Thyroid gland (tissue), 4 donors: ENCODE measurements at regions of chr2 and their contacts with region 1.

Region 1: DNA sequence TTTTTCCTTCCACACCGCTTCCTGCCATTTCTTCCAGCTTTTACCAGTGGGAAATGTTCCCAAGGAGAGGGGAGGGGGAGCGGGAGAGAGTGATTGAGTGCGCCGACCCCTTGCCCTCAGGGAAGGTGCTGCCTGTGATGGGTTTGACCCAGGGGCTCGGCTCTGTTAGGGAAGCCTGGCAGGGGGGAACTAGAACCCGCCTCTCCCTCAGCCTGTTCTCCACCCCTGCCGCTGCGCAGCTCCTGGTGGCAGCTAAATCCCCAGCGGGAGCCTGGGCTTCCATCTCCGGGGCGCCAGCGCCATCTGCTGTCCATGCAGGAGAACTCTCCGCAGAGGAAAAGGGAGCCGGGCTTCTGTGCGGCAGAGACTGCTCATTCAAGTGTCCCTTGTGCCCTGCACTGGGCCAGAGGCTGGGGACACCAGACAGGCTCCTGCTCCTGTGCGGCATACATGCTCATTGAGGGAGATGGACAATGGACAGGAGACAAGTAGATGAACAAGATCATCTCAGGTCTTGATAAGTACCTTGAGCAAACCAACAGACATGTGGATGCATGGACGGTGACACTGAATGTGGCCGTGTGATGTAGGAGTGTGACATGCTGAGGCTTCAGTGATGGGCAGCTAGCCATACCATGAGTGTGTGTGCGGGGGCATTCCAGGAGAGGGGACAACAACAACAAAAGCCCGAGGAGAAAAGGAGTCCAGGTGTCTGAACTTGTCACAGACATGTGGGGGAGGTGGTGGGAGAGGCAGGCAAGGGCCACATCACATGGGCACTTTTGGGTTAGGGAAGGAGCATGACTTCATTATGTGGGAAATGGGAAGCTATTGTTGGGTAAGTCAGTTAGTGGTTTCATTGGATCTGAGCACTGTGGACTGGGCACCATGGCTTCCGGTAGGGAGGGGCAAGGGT is 13.3 kb downstream of the CHPF start:
- DNase-seq: peak; percentile 72 to 84
- H3K4me3 ChIP-seq: no peak overlapping the region
- H3K27ac ChIP-seq: no peak overlapping the region
- H3K4me1 ChIP-seq: no peaks in the 10 kb centered on the region
- H3K27me3 ChIP-seq: no peaks in the 10 kb centered on the region
- CTCF ChIP-seq: peak; percentile 86 to 99 (median 97)
- POLR2A ChIP-seq: no peak

Region 2: DNA sequence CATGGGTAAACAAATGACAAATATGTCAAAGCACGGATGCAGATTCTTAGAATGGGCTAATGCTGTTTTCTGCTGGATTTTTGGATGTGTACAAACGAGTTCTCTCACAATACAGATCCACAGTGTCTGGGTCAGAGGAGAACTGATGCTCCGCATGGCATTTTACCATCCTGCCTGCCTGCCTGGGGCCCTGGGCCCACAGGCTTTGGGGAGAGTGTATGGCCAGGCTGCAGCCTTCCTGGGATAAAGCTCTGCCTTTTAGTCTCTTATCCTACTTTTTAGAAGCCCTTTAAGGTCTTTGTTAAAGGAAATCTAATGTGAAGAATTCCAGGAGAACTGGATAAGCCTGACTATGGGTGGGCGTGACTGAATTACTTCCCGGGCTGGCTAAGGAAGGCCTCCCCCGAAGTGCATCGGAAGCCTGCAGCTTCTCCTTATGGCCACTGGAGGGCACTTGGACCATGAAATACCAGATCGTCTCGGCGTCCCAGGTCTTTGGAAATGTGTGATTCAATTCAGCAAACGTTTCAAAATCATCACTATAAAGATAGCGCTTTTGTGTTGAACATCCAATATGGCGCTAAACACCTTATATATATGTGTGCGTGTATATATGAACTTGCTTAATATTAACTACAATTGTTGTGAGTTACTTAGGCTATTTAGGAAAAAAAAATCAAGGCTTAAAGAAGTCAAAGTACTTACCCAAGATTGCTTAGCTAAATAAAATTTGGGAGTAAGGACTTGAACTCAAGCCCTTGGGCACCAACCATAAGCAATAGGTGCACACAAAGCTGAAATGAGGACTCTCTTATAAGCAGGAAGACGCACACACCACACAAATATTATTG is 127.4 kb before region 1 on chr2:
- intact Hi-C with region 1: loop called (anchors 2 kb)
- DNase-seq: peak; percentile 61 to 66
- H3K4me3 ChIP-seq: no peak overlapping the region
- H3K27ac ChIP-seq: no peak overlapping the region
- H3K4me1 ChIP-seq: peaks cover 0 to 5% of the 10 kb centered on the region in 2 donors
- H3K27me3 ChIP-seq: no peaks in the 10 kb centered on the region
- CTCF ChIP-seq: peak; percentile 74 to 89 (median 83)
- POLR2A ChIP-seq: no peak

Region 3: DNA sequence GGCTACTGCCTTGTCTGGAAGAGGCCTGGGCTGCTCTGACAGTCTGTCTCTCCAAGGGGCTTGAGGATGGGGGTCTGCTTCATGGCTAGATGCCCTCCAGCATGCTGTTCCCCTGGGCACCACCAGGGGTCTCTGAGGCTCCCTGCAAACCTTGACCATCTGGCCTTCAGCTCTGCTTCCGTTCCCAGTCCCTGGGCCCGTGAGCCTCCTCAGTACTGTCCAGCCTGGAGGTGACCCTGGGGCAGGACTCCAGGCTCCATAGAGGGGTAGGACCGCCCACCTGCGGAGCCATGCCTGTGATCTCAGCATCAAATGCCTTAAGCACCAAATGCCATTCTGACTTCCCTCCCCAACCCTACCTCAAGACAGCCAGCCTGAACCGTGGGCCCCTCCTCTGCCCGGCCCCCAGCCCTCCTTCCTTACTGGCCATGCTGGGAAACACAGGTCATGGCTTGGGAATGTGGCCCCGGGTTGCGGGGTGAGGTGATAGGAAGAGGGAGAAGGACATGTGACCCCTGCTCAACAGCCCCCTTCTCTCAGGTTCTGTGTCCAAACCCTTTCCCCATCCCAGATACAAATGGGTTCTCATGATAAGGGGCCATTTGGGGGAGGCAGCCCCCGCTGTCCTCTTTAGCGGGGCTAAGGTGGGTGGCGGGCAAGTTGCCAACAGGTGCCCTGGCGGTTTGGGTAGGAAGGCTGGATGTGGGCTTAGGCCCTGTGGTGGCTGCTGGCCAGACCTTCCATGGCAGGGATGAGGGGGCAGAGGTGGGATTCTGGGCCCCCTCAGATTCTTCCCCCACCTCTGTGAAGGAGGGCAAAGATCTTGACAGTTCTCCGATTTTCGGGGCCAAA is 70.6 kb before region 1 on chr2:
- intact Hi-C with region 1: loop called (anchors 5 kb)
- DNase-seq: peak; percentile 61 to 64
- H3K4me3 ChIP-seq: no peak overlapping the region
- H3K27ac ChIP-seq: no peak overlapping the region
- H3K4me1 ChIP-seq: peaks cover 7 to 16% of the 10 kb centered on the region in 2 donors
- H3K27me3 ChIP-seq: no peaks in the 10 kb centered on the region
- CTCF ChIP-seq: peak; percentile 73 to 95 (median 82)
- POLR2A ChIP-seq: no peak

Region 4: DNA sequence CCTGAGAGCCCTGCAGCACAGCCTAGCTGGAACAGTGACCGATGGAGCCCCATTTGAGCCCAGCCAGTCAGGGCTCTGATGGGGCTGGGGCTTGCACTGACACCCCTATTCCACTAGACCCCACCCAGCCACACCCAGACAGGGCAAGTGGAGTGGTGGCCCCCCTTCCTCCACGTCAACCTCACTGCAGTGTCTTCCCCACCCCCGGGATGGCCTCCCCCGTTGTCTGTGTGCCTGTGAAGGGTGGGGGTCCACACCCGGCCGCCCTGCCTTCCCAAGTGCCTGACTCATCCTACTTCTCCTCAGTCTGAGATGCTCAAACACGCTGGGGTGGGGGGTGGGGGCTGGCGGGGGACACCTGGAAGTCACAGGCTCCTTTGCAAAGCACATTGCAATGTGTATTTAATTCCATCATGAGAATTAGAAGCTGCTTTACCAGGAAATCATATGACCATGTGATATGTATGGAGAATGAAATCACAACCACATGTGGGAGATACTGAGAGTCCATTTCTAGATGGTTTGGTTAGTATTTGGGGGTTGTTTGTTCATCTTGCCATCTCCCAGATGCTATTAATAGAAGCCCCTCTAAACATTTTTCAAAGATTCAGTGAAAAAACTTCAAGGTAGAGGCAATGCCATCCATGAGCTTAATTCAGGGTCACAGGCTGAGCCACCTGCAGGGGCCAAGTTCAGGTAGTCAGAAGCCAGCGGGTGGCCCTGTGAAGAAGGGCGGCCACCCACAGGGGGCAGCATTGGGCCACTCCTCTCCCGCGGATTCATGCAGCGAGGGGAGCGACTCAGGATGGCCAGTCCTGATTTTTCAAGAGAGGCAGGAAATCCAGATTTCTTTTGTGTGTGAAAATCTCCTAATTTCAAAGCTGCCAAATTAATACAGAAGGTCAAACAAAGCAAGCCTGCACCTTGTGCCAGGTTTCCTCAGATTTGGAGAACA is 54.3 kb before region 1 on chr2:
- intact Hi-C with region 1: loop called (anchors 5 kb)
- DNase-seq: peak; percentile 72 to 73
- H3K4me3 ChIP-seq: no peak overlapping the region
- H3K27ac ChIP-seq: no peak overlapping the region
- H3K4me1 ChIP-seq: peaks cover 12 to 18% of the 10 kb centered on the region in 2 donors
- H3K27me3 ChIP-seq: no peaks in the 10 kb centered on the region
- CTCF ChIP-seq: peak; percentile 53 to 85 (median 72)
- POLR2A ChIP-seq: no peak

Region 5: DNA sequence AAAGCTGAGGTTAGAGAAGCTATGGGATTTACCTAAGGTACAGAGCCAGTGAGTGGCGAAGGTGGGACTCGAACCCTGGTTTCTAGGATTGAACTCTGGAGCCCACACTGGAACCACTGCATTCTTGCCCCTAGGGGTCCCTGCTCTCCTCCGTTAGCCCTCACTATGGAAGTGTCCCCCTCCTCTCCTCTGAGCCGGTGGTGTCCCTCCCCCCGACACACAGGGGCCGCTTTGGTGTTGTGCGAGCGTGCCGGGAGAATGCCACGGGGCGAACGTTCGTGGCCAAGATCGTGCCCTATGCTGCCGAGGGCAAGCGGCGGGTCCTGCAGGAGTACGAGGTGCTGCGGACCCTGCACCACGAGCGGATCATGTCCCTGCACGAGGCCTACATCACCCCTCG is 40.1 kb before region 1 on chr2:
- intact Hi-C with region 1: loop called (anchors 5 kb)
- DNase-seq: no peak
- H3K4me3 ChIP-seq: no peak overlapping the region
- H3K27ac ChIP-seq: no peak overlapping the region
- H3K4me1 ChIP-seq: no peaks in the 10 kb centered on the region
- H3K27me3 ChIP-seq: peaks cover 5% of the 10 kb centered on the region
- CTCF ChIP-seq: no peak
- POLR2A ChIP-seq: no peak

Region 6: DNA sequence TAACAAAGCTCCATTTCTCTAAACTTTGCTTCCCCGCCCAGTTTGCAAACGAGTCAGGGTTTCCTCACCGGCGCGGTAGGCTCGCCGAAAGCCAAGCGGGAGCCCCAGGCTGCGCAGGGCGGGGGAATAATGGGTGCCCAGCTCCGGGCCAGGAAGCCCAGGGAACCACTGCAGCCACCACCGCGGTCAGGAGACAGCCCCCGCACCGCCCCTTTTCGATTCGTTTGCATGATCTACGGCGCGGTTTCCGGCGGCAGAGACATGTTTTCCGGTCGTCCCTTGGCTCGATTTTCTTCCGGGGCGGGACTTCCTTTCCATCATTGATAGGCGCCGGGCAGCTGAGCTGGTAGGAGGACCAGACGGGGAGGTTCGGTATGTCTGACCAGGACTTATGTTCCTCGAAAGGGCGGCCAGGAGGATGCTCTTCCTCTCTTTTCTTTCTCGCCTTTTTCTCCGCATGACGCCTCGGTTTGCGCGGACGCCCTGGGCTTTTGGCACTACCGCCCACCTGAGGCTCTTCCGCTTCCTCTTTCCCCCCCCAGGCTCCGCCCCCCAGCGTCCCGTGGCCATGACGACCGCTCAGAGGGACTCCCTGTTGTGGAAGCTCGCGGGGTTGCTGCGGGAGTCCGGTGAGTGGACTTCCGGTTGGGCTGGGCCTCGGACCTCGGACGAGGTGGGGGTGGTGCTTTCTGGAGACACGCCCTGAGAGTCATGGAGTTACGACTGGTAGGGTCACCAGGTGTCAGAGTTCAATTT is 67.4 kb after region 1 on chr2 and contains the start of gene STK11IP:
- intact Hi-C with region 1: no loop called
- DNase-seq: peak; percentile 98 to 99
- H3K4me3 ChIP-seq: peak within 1 kb of the TSS; percentile 35 to 77 (median 54)
- H3K27ac ChIP-seq: peak within 1 kb of the TSS; percentile 79 to 91 (median 89)
- H3K4me1 ChIP-seq: peaks cover 0 to 13% of the 10 kb centered on the region in 2 donors
- H3K27me3 ChIP-seq: no peaks in the 10 kb centered on the region
- CTCF ChIP-seq: peak in 1 of 6 experiments; percentile 6
- POLR2A ChIP-seq: peak; percentile 48 to 94
- total RNA-seq, gene STK11IP: 14.6 to 25.0 (median 19.7) TPM